K562 (cell line): ENCODE measurements at regions of chrX and their contacts with region 1.

Region 1: GRCh38 chrX:136496770-136497598 is at the start of gene HTATSF1:
- DNase-seq: peak; percentile 81 to 91 (median 81)
- ATAC-seq: peak; percentile 90
- H3K4me3 ChIP-seq: peak within 1 kb of the TSS; percentile 83
- H3K27ac ChIP-seq: peak within 1 kb of the TSS; percentile 92
- H3K4me1 ChIP-seq: no peaks in the 10 kb centered on the region
- H3K27me3 ChIP-seq: peaks cover 3 to 5% of the 10 kb centered on the region in 2 experiments; a peak in 3 of 5 replicates
- CTCF ChIP-seq: no peak
- EP300 ChIP-seq: no peak
- POLR2A ChIP-seq: peak; percentile 80
- RAD21 ChIP-seq: no peak
- polyA plus RNA-seq, gene HTATSF1: 17.7 to 29.0 TPM

Region 2: DNA sequence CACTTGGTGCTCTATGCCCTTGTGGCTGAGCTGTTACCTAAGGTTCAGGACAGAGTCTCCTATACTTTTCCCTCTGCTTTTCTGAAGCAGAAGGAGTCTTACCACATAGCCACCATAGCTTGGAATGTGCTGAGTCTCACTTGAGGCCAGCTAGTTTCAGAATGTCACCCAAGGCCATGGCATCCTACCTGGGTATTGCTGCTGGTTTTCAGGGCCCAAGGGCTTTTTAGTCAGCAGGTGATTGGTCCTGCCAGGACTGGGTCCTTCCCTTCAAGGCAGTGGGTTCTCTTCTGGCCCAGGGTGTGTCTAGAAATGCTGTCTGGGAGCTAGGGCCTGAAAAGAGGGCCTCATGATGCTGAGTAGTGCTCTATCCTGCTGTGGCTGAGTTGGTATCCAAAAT is 67.7 kb after region 1 on chrX:
- CTCF ChIA-PET with region 1: no interaction called
- POLR2A ChIA-PET with region 1: no interaction called
- in situ Hi-C with region 1: no loop called
- intact Hi-C with region 1: no loop called
- DNase-seq: no peak
- ATAC-seq: no peak
- H3K4me3 ChIP-seq: no peak overlapping the region
- H3K27ac ChIP-seq: no peak overlapping the region
- H3K4me1 ChIP-seq: no peaks in the 10 kb centered on the region
- H3K27me3 ChIP-seq: no peaks in the 10 kb centered on the region; a peak in 1 of 5 replicates
- CTCF ChIP-seq: no peak
- EP300 ChIP-seq: no peak
- POLR2A ChIP-seq: no peak
- RAD21 ChIP-seq: no peak

Region 3: DNA sequence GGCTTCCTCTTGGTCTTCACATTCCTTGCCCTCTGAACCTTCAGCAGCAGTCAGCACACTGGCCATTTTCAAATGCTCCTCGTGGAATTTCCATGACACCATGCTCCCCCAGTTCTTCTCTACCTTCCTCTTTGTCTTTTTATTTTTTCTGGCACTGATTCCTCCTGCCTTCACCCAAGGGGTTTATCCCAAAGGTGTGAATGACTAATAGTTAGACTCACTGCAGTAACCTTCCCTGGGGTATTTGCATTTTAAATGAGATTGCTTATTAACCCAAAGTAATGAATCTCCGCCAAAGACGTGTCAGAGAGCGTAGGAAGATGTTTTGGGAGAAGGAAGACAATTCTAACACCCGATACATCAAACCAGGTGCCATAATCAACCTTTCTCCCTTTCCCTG is 187.1 kb after region 1 on chrX:
- CTCF ChIA-PET with region 1: no interaction called
- POLR2A ChIA-PET with region 1: no interaction called
- in situ Hi-C with region 1: no loop called
- intact Hi-C with region 1: loop called (anchors 5 kb)
- DNase-seq: no peak
- ATAC-seq: no peak
- H3K4me3 ChIP-seq: no peak overlapping the region
- H3K27ac ChIP-seq: no peak overlapping the region
- H3K4me1 ChIP-seq: no peaks in the 10 kb centered on the region
- H3K27me3 ChIP-seq: no peaks in the 10 kb centered on the region
- CTCF ChIP-seq: no peak
- EP300 ChIP-seq: no peak
- POLR2A ChIP-seq: no peak
- RAD21 ChIP-seq: no peak